GM23248 (cell line): ENCODE measurements at regions of chr16 and their contacts with region 1.

Region 1: GRCh38 chr16:23182460-23183309 is at the start of gene SCNN1G:
- DNase-seq: peak; percentile 80
- H3K4me3 ChIP-seq: peak within 1 kb of the TSS; percentile 8; the same call in 1 of the 2 replicates
- H3K27ac ChIP-seq: no peak within 1 kb of the TSS
- H3K4me1 ChIP-seq: no peaks in the 10 kb centered on the region
- H3K27me3 ChIP-seq: peaks cover 47% of the 10 kb centered on the region
- total RNA-seq, gene SCNN1G: not detected in 2 replicates

Region 2: GRCh38 chr16:22007509-22008214 is 1175.0 kb before region 1 on chr16 and contains the start of gene MOSMO:
- in situ Hi-C with region 1: no loop called
- DNase-seq: peak; percentile 89
- H3K4me3 ChIP-seq: peak within 1 kb of the TSS; percentile 100
- H3K27ac ChIP-seq: peak within 1 kb of the TSS; percentile 61
- H3K4me1 ChIP-seq: peaks cover 10% of the 10 kb centered on the region
- H3K27me3 ChIP-seq: no peaks in the 10 kb centered on the region
- total RNA-seq, gene MOSMO: 11.7 and 17.1 TPM in 2 replicates

Region 3: DNA sequence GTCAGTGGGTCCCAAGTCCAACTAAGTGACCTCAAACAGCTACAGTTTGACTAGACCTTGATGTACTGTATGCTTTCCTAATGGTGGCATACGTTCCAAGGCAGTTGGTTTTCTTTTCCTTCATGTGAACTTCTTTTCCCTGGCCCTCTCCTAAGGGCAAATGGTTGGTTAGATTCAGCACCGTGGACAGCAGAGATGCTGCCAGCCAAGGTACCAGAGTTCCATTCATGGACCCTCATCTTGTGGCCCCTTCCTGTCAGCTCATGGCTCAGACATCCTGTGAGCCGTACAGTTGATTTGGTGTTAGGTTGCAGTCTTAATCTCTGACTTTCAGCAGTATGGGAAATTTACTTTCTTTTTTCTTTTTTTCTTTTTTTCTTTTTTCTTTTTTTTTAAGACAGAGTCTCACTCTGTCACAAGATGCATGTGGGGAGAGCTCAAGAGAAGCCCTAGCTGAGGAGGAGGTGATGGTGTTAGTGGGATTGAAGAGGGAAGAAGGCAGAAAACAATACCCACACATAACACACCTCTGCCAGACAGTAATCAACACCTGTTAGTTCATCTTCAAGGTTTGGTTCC is 155.8 kb before region 1 on chr16:
- in situ Hi-C with region 1: no loop called
- DNase-seq: peak; percentile 41
- H3K4me3 ChIP-seq: no peak overlapping the region
- H3K27ac ChIP-seq: no peak overlapping the region
- H3K4me1 ChIP-seq: 0 out of 2 replicates have a peak, but pooled peaks cover 4% of the 10 kb centered on the region
- H3K27me3 ChIP-seq: no peaks in the 10 kb centered on the region

Region 4: GRCh38 chr16:23048159-23048558 is 134.5 kb before region 1 on chr16:
- in situ Hi-C with region 1: no loop called
- DNase-seq: no peak
- H3K4me3 ChIP-seq: no peak overlapping the region
- H3K27ac ChIP-seq: no peak overlapping the region
- H3K4me1 ChIP-seq: no peaks in the 10 kb centered on the region
- H3K27me3 ChIP-seq: peaks cover 6% of the 10 kb centered on the region; the same call in 1 of the 2 replicates

Region 5: DNA sequence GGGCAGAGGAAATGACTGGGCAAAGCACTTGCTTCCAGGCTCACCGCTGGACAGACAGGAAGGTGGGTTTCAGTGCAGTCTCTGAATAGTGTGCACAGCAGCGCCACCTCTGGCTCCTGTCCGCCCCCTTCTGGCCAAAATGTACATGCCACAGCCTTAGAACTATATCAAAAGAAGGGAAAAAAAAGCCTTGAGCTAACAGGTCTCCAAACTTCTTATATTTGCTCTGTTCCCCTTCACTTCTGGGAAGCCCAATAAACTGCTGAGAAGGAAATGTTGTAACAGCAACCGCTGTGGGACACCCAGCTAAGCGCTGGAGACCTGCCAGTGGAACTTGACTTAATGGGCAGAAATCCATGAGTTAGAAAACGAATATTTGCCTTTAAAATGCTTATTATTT is 252.8 kb after region 1 on chr16:
- in situ Hi-C with region 1: loop called (anchors 10 kb)
- DNase-seq: peak; percentile 69
- H3K4me3 ChIP-seq: no peak overlapping the region
- H3K27ac ChIP-seq: no peak overlapping the region
- H3K4me1 ChIP-seq: no peaks in the 10 kb centered on the region
- H3K27me3 ChIP-seq: no peaks in the 10 kb centered on the region